Endothelial cell of umbilical vein (primary cell): ENCODE measurements at regions of chr11 and their contacts with region 1.

Region 1: DNA sequence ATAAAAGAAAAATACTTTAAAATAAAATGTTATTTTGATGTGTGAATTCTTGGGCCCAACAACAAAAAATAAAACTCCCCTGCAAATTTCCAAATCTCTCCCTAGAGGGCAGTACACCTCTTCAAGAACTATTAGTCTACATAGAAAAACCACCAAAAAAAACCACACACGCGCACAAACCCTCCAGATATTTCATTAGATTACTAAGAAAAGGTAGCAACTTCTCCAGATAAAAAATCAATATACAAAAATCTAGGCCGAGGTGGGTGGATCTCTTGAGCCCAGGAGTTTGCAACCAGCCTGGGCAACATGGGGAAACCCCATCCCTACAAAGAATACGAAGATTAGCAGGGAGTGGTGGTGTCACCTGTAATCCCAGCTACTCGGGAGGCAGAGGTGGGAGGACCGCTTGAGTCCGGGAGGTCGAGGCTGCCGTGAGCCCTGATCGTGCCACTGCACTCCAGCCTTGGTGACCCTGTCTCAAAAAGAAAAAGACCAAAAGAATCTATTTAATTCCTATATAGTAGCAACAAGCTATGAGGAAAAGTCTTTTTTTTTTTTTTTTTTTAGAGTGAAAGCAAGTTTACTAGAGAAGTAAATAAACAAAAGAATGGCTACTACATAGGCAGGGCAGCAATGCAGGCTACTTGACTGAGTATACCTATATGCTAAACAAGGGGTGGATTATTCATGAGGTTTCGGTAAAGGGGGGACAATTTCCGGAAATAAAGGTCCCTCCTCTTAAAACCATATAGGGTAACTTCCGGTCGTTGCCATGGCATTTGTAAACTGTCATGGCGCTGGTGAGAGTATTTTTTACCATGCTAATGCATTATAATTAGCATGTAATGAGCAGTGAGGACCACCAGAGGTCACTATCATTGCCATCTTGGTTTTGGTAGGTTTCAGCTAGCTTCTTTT is 13.1 kb downstream of the B3GNT6 start:
- DNase-seq: peak; percentile 97
- H3K4me3 ChIP-seq: peak overlapping the region; percentile 28 to 36 (median 31)
- H3K27ac ChIP-seq: no peak overlapping the region
- H3K4me1 ChIP-seq: peaks cover 5% of the 10 kb centered on the region
- H3K27me3 ChIP-seq: peaks cover 4 to 10% of the 10 kb centered on the region in 2 experiments
- CTCF ChIP-seq: peak; percentile 48 to 59
- POLR2A ChIP-seq: no peak

Region 2: GRCh38 chr11:77073328-77074001 is 26.2 kb after region 1 on chr11:
- CTCF ChIA-PET with region 1: interaction called, 40 read pairs
- POLR2A ChIA-PET with region 1: no interaction called
- dilution Hi-C with region 1: no loop called
- intact Hi-C with region 1: loop called (anchors 1 kb)
- DNase-seq: peak; percentile 88
- H3K4me3 ChIP-seq: no peak overlapping the region
- H3K27ac ChIP-seq: peak overlapping the region; percentile 80
- H3K4me1 ChIP-seq: peaks cover 30% of the 10 kb centered on the region
- H3K27me3 ChIP-seq: no peaks in the 10 kb centered on the region
- CTCF ChIP-seq: peak; percentile 28 to 46
- POLR2A ChIP-seq: no peak

Region 3: DNA sequence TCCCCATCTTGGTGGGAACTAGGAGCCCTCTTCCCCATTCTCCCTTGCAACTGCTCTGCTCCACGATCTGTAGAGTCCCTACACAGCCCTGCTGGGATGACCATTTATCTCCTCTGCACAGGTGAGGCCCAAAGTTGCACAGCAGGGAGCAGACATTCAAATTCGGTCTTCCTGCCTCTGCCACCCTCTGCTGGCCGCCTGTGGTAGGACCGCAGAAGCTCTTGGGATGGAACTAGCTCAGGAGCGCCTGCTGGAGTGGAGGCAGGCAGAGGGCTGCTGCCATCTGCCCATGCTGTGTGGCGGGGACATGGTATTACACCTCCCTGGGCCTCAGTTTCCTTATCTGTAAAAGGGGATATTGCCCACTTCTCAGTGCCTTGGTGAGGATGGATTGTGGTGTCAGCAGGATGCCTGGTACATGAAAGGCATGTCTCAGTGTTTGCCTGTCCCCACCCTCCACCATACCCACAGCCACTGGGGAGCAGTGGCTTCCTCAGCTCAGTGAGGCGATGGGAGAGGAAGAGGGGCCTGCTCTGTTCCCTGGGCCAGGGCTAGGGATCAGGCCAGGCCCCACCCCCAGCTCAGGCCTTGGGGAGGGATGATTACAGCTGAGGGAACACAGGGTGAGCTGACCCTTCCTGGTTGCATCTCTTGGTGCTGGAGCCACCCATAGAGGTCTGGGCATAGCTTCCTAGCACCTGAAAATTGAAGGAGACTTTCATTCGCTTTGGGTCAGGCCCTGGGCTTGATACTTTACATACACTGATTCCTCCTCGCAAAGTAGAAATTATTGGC is 44.1 kb after region 1 on chr11:
- CTCF ChIA-PET with region 1: interaction called, 316 read pairs
- POLR2A ChIA-PET with region 1: no interaction called
- dilution Hi-C with region 1: no loop called
- intact Hi-C with region 1: loop called (anchors 1 kb)
- DNase-seq: peak; percentile 73
- H3K4me3 ChIP-seq: no peak overlapping the region
- H3K27ac ChIP-seq: no peak overlapping the region
- H3K4me1 ChIP-seq: no peaks in the 10 kb centered on the region
- H3K27me3 ChIP-seq: no peaks in the 10 kb centered on the region
- CTCF ChIP-seq: peak; percentile 84 to 91
- POLR2A ChIP-seq: no peak

Region 4: GRCh38 chr11:77107950-77108349 is 60.7 kb after region 1 on chr11:
- CTCF ChIA-PET with region 1: interaction called, 64 read pairs
- POLR2A ChIA-PET with region 1: interaction called, 4 read pairs
- dilution Hi-C with region 1: no loop called
- intact Hi-C with region 1: loop called (anchors 1 kb)
- DNase-seq: peak; percentile 60
- H3K4me3 ChIP-seq: no peak overlapping the region
- H3K27ac ChIP-seq: no peak overlapping the region
- H3K4me1 ChIP-seq: peaks cover 17% of the 10 kb centered on the region
- H3K27me3 ChIP-seq: no peaks in the 10 kb centered on the region
- CTCF ChIP-seq: no peak
- POLR2A ChIP-seq: no peak

Region 5: GRCh38 chr11:77187776-77188632 is 140.7 kb after region 1 on chr11:
- CTCF ChIA-PET with region 1: interaction called, 37 read pairs
- POLR2A ChIA-PET with region 1: interaction called, 4 read pairs
- dilution Hi-C with region 1: no loop called
- intact Hi-C with region 1: loop called (anchors 1 kb)
- DNase-seq: peak; percentile 75
- H3K4me3 ChIP-seq: no peak overlapping the region
- H3K27ac ChIP-seq: no peak overlapping the region
- H3K4me1 ChIP-seq: no peaks in the 10 kb centered on the region
- H3K27me3 ChIP-seq: no peaks in the 10 kb centered on the region
- CTCF ChIP-seq: peak; percentile 81 to 94
- POLR2A ChIP-seq: no peak